Naive thymus-derived CD4-positive, alpha-beta T cell (primary cell): ENCODE measurements at regions of chr14 and their contacts with region 1.

Region 1: DNA sequence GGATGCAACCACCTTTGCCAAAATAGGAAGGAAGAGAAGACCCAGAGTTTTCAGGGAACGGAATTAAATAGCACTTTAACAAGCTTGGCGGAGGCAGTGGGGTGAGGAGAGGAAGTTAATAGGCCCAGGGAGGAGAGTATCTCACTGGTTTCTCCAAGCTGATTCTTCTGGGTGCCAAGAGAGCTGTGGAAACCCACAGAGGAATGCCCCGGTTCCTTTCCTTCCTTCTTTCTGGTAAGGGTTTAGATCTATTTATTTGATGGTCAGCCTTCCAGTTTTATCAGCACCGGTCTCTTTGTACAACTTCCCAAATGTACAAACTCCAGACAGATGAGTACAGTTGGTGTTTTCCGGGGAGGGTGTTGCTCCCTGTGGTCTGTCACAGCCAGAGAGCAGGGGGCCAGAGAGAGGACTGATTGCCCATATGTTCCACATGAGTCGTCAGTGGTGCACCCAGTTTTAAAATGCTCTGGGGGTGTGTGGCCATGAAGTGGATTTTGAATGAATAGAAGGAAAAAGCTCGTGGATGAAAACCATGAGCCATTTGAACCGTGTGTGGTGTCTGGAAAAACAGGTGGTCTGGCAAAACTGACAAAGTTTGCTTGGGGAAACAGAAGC is 26.6 kb downstream of the PRKCH start:
- DNase-seq: peak in 1 of 9 donors; percentile 34
- ATAC-seq: peak; percentile 28
- H3K4me3 ChIP-seq: peak overlapping the region; percentile 33
- H3K4me3 Mint-ChIP-seq: peak overlapping the region; percentile 76 to 97 (median 86)
- H3K27ac ChIP-seq: peak overlapping the region; percentile 76
- H3K27ac Mint-ChIP-seq: peak overlapping the region in 8 of 9 donors; percentile 91 to 100 (median 98)
- H3K4me1 ChIP-seq: peaks cover 96 to 98% of the 10 kb centered on the region in 2 donors
- H3K4me1 Mint-ChIP-seq: peaks cover 0 to 97% (median 82%) of the 10 kb centered on the region in 7 donors
- H3K27me3 ChIP-seq: no peaks in the 10 kb centered on the region
- H3K27me3 Mint-ChIP-seq: no peaks in the 10 kb centered on the region

Region 2: DNA sequence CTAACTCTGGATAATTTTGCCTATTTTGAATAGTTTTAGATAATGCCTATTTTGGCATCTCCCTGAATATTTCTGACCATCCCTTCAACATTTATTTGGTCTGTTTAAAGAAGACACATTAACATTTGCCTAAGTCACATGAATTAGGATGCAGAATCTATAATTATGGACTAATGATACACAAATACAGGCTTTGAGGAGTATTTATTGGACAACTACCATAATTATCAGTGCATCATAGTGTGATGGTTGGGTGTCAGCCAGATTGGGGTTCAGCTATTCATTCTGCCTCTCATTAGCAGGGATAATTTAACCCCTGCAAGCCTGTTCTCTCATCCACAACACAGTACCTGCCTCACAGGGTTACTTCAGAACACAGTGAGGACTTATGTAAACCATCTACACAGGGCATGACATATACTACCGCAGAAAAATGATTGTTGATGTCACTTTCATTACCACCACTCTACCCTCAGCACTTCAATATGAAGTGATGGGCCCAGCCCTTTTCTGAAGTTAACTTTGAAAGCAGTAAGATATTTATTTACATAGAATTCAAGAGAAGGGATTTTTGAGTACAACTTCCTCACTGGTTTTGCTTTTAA is 12.2 kb before region 1 on chr14:
- CTCF ChIA-PET with region 1: interaction called, 8 read pairs
- POLR2A ChIA-PET with region 1: interaction called, 142 read pairs
- intact Hi-C with region 1: loop called (anchors 1 kb)
- DNase-seq: peak in 7 of 9 donors; percentile 55 to 84 (median 78)
- ATAC-seq: peak; percentile 77
- H3K4me3 ChIP-seq: peak overlapping the region; percentile 4
- H3K4me3 Mint-ChIP-seq: peak overlapping the region; percentile 65 to 97 (median 84)
- H3K27ac ChIP-seq: peak overlapping the region; percentile 94
- H3K27ac Mint-ChIP-seq: peak overlapping the region in 8 of 9 donors; percentile 96 to 100 (median 100)
- H3K4me1 ChIP-seq: peaks cover 80 to 86% of the 10 kb centered on the region in 2 donors
- H3K4me1 Mint-ChIP-seq: peaks cover 60 to 88% (median 77%) of the 10 kb centered on the region in 7 donors
- H3K27me3 ChIP-seq: no peaks in the 10 kb centered on the region
- H3K27me3 Mint-ChIP-seq: no peaks in the 10 kb centered on the region

Region 3: DNA sequence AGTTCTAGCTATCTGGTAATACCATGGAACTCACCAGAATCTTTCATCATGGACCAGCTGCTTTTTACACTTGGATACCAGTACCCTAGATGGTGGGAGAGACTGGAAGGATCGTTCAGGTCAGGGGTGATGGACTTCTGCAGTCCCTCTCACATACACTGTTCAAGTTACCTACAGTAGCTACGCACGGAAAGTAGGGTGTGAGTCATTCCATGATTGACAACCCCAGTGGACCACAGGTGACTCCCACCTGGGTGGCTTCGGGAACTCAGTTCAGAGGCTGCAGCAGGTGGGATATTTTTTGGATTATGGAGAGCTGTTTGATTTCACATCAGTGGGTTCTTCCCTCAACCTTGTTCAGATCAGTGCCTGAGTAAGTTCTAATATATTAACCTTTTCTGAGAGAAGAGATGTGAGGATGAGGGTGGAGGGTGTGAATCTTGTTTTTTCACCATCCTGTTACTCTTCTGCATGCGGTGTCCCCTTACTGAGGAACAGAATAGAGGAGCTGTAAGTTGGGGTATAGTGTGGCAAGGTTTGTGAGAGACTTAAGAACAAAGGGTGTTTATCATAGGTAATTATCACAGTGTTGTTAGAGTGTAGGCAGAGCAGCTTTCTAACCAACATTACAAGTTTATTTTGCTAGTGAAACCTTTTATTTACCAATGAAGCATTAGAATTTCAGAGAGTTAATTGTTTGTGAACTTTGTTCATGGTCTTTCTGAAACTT is 13.0 kb after region 1 on chr14:
- CTCF ChIA-PET with region 1: interaction called, 4 read pairs
- POLR2A ChIA-PET with region 1: interaction called, 12 read pairs
- intact Hi-C with region 1: loop called (anchors 1 to 2 kb)
- DNase-seq: no peak
- ATAC-seq: peak; percentile 35
- H3K4me3 ChIP-seq: no peak overlapping the region
- H3K4me3 Mint-ChIP-seq: peak overlapping the region in 9 of 10 donors; percentile 10 to 97 (median 64)
- H3K27ac ChIP-seq: peak overlapping the region; percentile 9
- H3K27ac Mint-ChIP-seq: peak overlapping the region in 7 of 9 donors; percentile 36 to 89 (median 61)
- H3K4me1 ChIP-seq: peaks cover 75 to 89% of the 10 kb centered on the region in 2 donors
- H3K4me1 Mint-ChIP-seq: peaks cover 0 to 53% (median 40%) of the 10 kb centered on the region in 7 donors
- H3K27me3 ChIP-seq: no peaks in the 10 kb centered on the region
- H3K27me3 Mint-ChIP-seq: no peaks in the 10 kb centered on the region

Region 4: DNA sequence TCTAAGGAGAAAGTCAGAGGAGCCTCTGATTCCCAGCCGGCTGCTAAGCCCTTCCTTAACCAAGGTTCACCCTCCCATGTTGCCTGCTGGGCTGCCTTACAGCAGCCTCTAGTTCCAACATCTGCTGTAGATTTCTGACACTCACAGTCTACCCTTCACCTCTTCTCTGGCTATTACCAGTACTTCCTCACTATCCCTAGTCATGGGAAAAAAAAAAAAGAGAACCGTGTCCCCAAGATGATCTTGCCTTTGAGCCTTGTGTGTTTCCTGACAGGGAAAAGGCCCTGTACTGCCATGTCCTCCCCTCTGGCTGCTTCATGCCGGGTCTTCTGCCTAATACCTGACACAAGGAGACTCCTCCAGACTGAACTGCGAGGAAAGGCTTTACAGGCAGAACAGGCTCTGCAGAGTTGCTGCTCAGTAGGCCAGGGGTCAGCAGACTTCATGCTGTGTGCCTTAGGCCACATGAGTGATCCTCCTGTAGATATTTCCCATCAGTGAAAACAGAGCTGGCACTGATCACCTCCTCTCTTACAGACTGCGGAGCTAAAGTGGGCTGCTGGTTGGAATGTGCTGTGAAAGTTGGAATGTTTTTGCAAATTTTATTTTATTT is 20.3 kb after region 1 on chr14:
- CTCF ChIA-PET with region 1: no interaction called
- POLR2A ChIA-PET with region 1: interaction called, 3 read pairs
- intact Hi-C with region 1: loop called in 1 of 2 experiments (anchors 2 kb)
- DNase-seq: no peak
- ATAC-seq: no peak
- H3K4me3 ChIP-seq: no peak overlapping the region
- H3K4me3 Mint-ChIP-seq: peak overlapping the region in 7 of 10 donors; percentile 27 to 81 (median 68)
- H3K27ac ChIP-seq: peak overlapping the region; percentile 50
- H3K27ac Mint-ChIP-seq: peak overlapping the region in 5 of 9 donors; percentile 25 to 93 (median 75)
- H3K4me1 ChIP-seq: peaks cover 72 to 91% of the 10 kb centered on the region in 2 donors
- H3K4me1 Mint-ChIP-seq: peaks cover 0 to 54% (median 33%) of the 10 kb centered on the region in 7 donors
- H3K27me3 ChIP-seq: no peaks in the 10 kb centered on the region
- H3K27me3 Mint-ChIP-seq: no peaks in the 10 kb centered on the region

Region 5: DNA sequence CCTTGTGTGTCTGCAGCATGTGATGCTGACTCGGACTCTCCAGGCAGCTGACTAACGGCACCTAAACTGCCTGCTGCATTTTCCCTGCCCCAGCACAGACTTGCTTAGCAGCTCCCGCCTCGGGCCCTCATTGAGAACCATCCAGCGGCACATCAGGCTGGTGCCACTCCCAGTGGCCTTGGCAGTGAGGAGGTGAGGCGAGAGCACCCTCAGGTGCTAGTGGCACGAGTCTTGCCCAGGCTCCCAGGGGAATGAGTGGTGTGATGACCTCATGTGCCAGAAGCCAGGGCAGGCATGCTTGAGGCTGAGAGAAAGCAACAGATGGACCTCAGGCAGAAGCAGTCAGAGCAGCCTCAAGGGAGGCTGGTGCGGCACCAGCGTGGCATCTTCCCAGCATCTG is 33.6 kb after region 1 on chr14:
- CTCF ChIA-PET with region 1: no interaction called
- POLR2A ChIA-PET with region 1: interaction called, 11 read pairs
- intact Hi-C with region 1: loop called in 1 of 2 experiments (anchors 1 kb)
- DNase-seq: no peak
- ATAC-seq: no peak
- H3K4me3 ChIP-seq: no peak overlapping the region
- H3K4me3 Mint-ChIP-seq: peak overlapping the region in 8 of 10 donors; percentile 7 to 69 (median 59)
- H3K27ac ChIP-seq: peak overlapping the region; percentile 32
- H3K27ac Mint-ChIP-seq: peak overlapping the region in 6 of 9 donors; percentile 24 to 93 (median 86)
- H3K4me1 ChIP-seq: peaks cover 97 to 99% of the 10 kb centered on the region in 2 donors
- H3K4me1 Mint-ChIP-seq: peaks cover 0 to 56% (median 46%) of the 10 kb centered on the region in 7 donors
- H3K27me3 ChIP-seq: no peaks in the 10 kb centered on the region
- H3K27me3 Mint-ChIP-seq: no peaks in the 10 kb centered on the region

Region 6: GRCh38 chr14:61420326-61420725 is 72.4 kb after region 1 on chr14:
- CTCF ChIA-PET with region 1: no interaction called
- POLR2A ChIA-PET with region 1: no interaction called
- intact Hi-C with region 1: no loop called
- DNase-seq: peak in 1 of 9 donors; percentile 37
- ATAC-seq: peak; percentile 24
- H3K4me3 ChIP-seq: no peak overlapping the region
- H3K4me3 Mint-ChIP-seq: peak overlapping the region in 8 of 10 donors; percentile 43 to 77 (median 58)
- H3K27ac ChIP-seq: peak overlapping the region; percentile 41
- H3K27ac Mint-ChIP-seq: peak overlapping the region in 6 of 9 donors; percentile 75 to 88 (median 83)
- H3K4me1 ChIP-seq: peaks cover 81 to 83% of the 10 kb centered on the region in 2 donors
- H3K4me1 Mint-ChIP-seq: peaks cover 4 to 90% (median 26%) of the 10 kb centered on the region in 7 donors
- H3K27me3 ChIP-seq: no peaks in the 10 kb centered on the region
- H3K27me3 Mint-ChIP-seq: no peaks in the 10 kb centered on the region